ENCODE measurements at regions of chr10 and their contacts with region 1.

Region 1: DNA sequence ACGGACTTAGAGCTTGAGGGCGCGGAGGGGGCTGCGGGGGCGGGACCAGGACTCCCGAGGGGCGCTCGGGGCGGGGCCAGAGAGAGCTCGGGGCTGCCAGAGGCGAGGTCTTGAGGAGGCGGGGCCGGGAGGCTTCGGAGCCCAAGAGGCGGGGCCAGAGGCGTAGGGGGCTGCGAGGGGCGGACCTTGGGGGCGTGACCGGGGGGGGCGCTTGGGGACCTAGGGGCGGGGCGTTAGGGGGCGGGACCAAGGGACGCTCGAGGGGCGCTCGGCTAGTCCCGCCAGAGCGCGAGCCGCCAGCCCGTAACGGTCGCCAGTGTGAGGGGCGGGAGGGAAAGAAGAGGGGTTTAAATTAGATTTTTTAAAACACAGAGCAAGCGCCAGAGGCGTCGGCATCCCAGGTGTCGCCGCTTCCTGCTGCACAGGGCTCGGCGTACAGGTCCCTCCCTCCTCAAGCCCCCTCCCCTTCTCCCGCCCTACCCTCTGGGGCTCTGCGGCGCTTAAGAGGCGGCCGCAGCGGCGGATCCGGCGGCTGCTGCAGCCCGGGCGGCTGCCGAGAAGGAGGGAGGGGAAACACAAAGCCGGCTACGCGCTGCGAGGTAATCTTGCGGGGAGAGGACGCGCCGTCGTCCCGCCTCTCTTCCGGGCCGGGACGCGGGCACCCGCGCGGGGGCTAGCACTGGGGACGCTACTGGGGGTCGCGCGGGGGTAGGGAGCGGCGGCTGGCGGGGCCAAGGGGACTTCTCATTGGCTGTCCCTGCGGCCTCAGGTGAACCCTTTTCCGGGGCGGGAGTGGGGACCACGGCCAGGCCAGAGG is at the start of gene ADD3:
- DNase-seq: peak; percentile 95 to 97
- H3K4me3 ChIP-seq: peak within 1 kb of the TSS; percentile 75 to 96 (median 92)
- H3K27ac ChIP-seq: peak within 1 kb of the TSS; percentile 88 to 94 (median 92)
- H3K4me1 ChIP-seq: peaks cover 34 to 43% of the 10 kb centered on the region in 2 donors
- H3K27me3 ChIP-seq: no peaks in the 10 kb centered on the region
- CTCF ChIP-seq: no peak
- POLR2A ChIP-seq: peak in 1 of 2 donors; percentile 90
- total RNA-seq, gene ADD3: 257 to 644 (median 358) TPM

Region 2: DNA sequence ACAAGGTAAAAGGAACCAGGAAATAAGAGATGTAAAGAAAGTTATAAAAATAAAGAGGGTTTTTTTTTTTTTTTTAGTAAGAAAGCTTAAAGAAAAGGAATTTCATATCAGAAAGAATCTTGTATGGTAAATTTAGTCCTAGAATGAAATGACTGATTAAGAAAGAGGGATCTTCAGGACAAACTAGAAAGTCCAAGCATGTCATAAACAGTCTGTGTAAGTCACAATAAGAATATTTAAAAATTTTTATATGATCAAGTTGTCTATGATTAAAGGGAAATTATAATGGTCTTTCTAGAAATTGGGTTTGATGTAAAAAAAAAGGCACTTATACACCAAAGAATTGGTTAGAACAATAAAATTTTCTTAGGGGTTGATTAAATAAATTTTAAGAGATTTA is 374.1 kb before region 1 on chr10:
- intact Hi-C with region 1: no loop called
- DNase-seq: no peak
- H3K4me3 ChIP-seq: no peak overlapping the region
- H3K27ac ChIP-seq: no peak overlapping the region
- H3K4me1 ChIP-seq: no peaks in the 10 kb centered on the region
- H3K27me3 ChIP-seq: no peaks in the 10 kb centered on the region
- CTCF ChIP-seq: no peak
- POLR2A ChIP-seq: no peak

Region 3: DNA sequence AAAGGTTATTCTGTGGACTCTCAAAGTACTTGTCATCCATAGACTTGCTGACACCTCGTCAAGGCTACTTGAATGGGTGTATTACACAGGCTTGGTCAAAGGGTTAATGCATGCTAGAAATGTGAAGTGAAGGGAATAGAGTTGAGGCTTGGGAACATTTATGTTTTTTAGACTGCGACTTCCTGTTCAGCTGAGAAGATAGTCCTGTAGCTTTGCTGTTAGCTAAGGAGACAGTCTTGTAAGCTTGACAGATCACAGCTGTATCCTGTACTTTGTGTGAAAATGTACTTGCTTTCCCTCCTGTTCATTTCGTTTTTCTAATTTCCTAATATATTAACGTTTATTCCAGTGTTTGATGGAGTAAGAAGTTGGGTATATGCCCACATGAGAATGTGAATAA is 52.0 kb after region 1 on chr10:
- intact Hi-C with region 1: no loop called
- DNase-seq: no peak
- H3K4me3 ChIP-seq: no peak overlapping the region
- H3K27ac ChIP-seq: peak overlapping the region in 1 of 3 donors; percentile 3
- H3K4me1 ChIP-seq: peaks cover 28 to 53% of the 10 kb centered on the region in 2 donors
- H3K27me3 ChIP-seq: no peaks in the 10 kb centered on the region
- CTCF ChIP-seq: no peak
- POLR2A ChIP-seq: no peak

Region 4: DNA sequence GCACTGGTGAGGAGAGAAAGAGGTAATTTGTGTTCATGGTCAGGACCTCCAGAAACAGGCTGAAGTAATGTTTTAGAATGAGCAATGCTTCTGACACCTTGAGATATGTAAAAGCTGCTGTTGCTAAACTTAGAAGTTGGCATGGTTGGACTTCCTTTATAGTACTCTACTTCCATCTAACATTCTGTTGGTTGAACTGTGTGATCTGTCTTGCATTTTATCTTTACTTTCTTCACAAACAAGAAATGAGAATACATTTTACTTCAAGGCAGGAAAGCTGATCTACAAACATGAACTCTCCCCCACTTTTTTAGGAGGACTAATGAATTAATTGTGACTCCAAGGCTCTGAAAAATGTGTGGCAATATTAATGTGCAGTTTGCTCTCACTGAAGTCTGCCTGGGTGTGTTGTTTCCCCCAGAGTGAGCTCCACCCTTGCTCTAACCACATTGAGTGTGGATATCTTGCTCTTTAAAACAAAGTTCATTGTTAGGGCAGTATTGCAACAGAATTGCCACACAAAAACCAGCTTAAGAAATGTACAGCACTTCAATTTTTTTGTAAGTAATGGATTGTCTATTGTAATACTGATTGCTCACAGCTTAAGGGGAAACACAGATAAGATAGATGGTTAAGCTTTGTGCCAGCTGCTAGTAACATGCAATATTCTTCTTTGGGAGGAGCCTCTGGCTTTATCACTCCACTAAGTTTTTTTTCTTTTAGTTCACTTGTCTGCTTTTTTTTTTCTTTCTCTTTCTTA is 68.8 kb after region 1 on chr10:
- intact Hi-C with region 1: loop called (anchors 10 kb)
- DNase-seq: no peak
- H3K4me3 ChIP-seq: no peak overlapping the region
- H3K27ac ChIP-seq: peak overlapping the region; percentile 41 to 77 (median 53)
- H3K4me1 ChIP-seq: peaks cover 66 to 76% of the 10 kb centered on the region in 2 donors
- H3K27me3 ChIP-seq: no peaks in the 10 kb centered on the region
- CTCF ChIP-seq: no peak
- POLR2A ChIP-seq: peak in 1 of 2 donors; percentile 18

Region 5: DNA sequence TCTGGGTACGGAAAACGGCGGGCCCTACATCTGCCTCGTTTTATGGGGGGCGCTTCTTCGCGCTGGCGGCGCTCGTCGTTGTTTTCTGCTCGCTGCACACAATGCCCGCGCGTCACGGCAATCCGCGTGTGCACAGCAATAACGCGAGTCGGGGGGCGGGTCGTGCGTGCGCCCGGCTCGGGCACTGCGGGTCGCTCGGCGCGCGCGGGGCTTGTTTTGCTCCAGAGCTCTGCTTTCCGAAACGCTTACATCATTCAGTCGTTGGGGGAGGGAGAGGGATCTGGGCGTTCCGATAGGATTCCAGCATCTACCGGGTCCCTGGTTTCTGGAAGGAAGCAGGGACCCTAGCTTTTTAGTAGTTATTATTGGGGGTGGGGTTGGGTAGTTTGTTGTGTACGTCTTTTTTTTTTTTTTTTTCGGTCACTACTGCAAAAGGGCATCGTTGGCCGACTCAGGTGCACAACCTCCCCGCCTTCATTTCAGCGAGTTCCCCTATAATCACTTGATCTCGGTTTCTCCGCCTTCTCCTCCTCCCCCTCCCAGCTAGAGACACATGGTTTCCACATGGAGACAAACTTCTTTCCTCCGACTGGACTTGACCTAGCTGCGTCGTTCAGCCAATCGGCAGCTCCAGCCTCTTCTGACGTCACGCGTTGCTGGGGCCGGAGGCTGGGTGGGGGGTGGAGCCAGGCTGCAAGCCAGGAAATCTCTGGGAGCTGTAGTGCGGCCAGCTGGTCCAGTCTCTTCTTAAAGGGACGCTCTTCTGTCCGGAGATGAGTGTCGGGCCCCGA is 203.0 kb after region 1 on chr10:
- intact Hi-C with region 1: loop called (anchors 5 kb)
- DNase-seq: peak; percentile 95 to 96
- H3K4me3 ChIP-seq: peak overlapping the region; percentile 63 to 87 (median 76)
- H3K27ac ChIP-seq: peak overlapping the region; percentile 32 to 87 (median 67)
- H3K4me1 ChIP-seq: peaks cover 6 to 11% of the 10 kb centered on the region in 2 donors
- H3K27me3 ChIP-seq: no peaks in the 10 kb centered on the region
- CTCF ChIP-seq: peak in 2 of 6 experiments; percentile 8
- POLR2A ChIP-seq: peak in 1 of 2 donors; percentile 70